ENCODE measurements at regions of chr4 and their contacts with region 1.

Region 1: DNA sequence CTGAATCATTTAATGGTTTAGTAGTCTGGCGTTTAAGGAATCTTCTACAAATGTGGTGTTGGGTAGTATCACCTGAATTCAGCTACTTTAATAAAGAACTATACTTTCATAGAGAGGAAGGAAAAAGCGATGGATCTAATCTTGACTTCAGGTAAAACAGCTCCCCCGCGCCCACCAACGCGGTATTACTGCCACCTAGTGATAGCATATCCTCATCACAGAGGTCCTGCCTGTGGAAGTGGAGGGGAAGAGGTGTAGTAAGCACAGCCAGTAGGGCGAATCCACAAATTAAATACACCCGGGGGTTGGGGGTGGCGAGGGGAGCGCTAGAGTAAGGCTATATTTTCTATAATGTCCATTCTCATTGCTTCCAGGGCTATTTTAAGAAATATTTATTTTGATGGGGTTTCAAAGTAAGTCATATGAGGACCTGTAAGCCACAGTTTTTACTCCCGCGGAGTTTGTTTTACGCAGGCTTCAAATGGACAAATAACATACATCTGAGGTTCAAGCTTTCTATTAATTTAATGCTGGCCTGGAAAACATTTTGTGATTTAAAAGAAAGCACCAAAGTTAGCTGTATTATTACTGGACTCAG is 8.3 kb upstream of the DAPP1 start:
- DNase-seq: peak; percentile 28 to 78 (median 72)
- ATAC-seq: peak; percentile 92
- H3K4me3 ChIP-seq: no peak overlapping the region
- H3K4me3 Mint-ChIP-seq: no peak overlapping the region
- H3K27ac ChIP-seq: no peak overlapping the region
- H3K27ac Mint-ChIP-seq: no peak overlapping the region
- H3K4me1 ChIP-seq: no peaks in the 10 kb centered on the region
- H3K4me1 Mint-ChIP-seq: peaks cover 4 to 10% (median 5%) of the 10 kb centered on the region in 7 donors
- H3K27me3 ChIP-seq: no peaks in the 10 kb centered on the region
- H3K27me3 Mint-ChIP-seq: peaks cover 0 to 17% (median 7%) of the 10 kb centered on the region in 5 donors

Region 2: GRCh38 chr4:99117876-99118693 is 690.3 kb before region 1 on chr4:
- CTCF ChIA-PET with region 1: no interaction called
- POLR2A ChIA-PET with region 1: no interaction called
- intact Hi-C with region 1: loop called (anchors 1 kb)
- DNase-seq: peak in 3 of 9 donors; percentile 0 to 18 (median 7)
- ATAC-seq: no peak
- H3K4me3 ChIP-seq: no peak overlapping the region
- H3K4me3 Mint-ChIP-seq: no peak overlapping the region
- H3K27ac ChIP-seq: no peak overlapping the region
- H3K27ac Mint-ChIP-seq: peak overlapping the region in 1 of 9 donors; percentile 44
- H3K4me1 ChIP-seq: no peaks in the 10 kb centered on the region
- H3K4me1 Mint-ChIP-seq: no peaks in the 10 kb centered on the region
- H3K27me3 ChIP-seq: no peaks in the 10 kb centered on the region
- H3K27me3 Mint-ChIP-seq: peaks cover 0 to 7% (median 0%) of the 10 kb centered on the region in 5 donors

Region 3: GRCh38 chr4:99471349-99471748 is 337.0 kb before region 1 on chr4:
- CTCF ChIA-PET with region 1: no interaction called
- POLR2A ChIA-PET with region 1: no interaction called
- intact Hi-C with region 1: loop called in 1 of 2 experiments (anchors 1 kb)
- DNase-seq: no peak
- ATAC-seq: no peak
- H3K4me3 ChIP-seq: no peak overlapping the region
- H3K4me3 Mint-ChIP-seq: no peak overlapping the region
- H3K27ac ChIP-seq: no peak overlapping the region
- H3K27ac Mint-ChIP-seq: no peak overlapping the region
- H3K4me1 ChIP-seq: no peaks in the 10 kb centered on the region
- H3K4me1 Mint-ChIP-seq: peaks cover 0 to 1% (median 0%) of the 10 kb centered on the region in 7 donors
- H3K27me3 ChIP-seq: no peaks in the 10 kb centered on the region
- H3K27me3 Mint-ChIP-seq: peaks cover 0 to 14% (median 0%) of the 10 kb centered on the region in 5 donors

Region 4: DNA sequence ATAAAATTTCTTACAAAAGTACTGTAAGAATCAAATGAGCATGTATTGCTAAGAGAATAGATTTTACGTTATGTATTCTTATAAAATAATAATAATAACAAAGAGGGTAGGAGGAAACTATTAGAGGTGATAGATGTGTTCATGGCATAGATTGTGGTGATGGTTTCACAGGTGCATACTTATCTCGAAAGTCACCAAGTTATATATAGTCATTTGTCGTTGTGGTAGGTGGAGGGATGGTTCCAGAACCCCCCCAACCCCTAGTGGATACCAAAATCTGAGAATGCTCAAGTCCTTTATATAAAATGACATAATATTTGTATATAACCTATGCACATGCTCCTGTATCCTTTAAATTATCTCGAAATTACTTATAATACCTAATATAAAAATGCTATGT is 178.4 kb after region 1 on chr4:
- CTCF ChIA-PET with region 1: no interaction called
- POLR2A ChIA-PET with region 1: no interaction called
- intact Hi-C with region 1: no loop called
- DNase-seq: no peak
- ATAC-seq: no peak
- H3K4me3 ChIP-seq: no peak overlapping the region
- H3K4me3 Mint-ChIP-seq: no peak overlapping the region
- H3K27ac ChIP-seq: no peak overlapping the region
- H3K27ac Mint-ChIP-seq: no peak overlapping the region
- H3K4me1 ChIP-seq: no peaks in the 10 kb centered on the region
- H3K4me1 Mint-ChIP-seq: no peaks in the 10 kb centered on the region
- H3K27me3 ChIP-seq: no peaks in the 10 kb centered on the region
- H3K27me3 Mint-ChIP-seq: peaks cover 0 to 29% (median 13%) of the 10 kb centered on the region in 5 donors

Region 5: GRCh38 chr4:101055392-101055791 is 1247.0 kb after region 1 on chr4:
- CTCF ChIA-PET with region 1: no interaction called
- POLR2A ChIA-PET with region 1: no interaction called
- intact Hi-C with region 1: no loop called
- DNase-seq: no peak
- ATAC-seq: no peak
- H3K4me3 ChIP-seq: no peak overlapping the region
- H3K4me3 Mint-ChIP-seq: no peak overlapping the region
- H3K27ac ChIP-seq: no peak overlapping the region
- H3K27ac Mint-ChIP-seq: no peak overlapping the region
- H3K4me1 ChIP-seq: no peaks in the 10 kb centered on the region
- H3K4me1 Mint-ChIP-seq: peaks cover 0 to 3% (median 0%) of the 10 kb centered on the region in 7 donors
- H3K27me3 ChIP-seq: no peaks in the 10 kb centered on the region
- H3K27me3 Mint-ChIP-seq: no peaks in the 10 kb centered on the region